Left ventricle myocardium inferior (tissue), 1 donor: ENCODE measurements at regions of chr22 and their contacts with region 1.

Region 1: DNA sequence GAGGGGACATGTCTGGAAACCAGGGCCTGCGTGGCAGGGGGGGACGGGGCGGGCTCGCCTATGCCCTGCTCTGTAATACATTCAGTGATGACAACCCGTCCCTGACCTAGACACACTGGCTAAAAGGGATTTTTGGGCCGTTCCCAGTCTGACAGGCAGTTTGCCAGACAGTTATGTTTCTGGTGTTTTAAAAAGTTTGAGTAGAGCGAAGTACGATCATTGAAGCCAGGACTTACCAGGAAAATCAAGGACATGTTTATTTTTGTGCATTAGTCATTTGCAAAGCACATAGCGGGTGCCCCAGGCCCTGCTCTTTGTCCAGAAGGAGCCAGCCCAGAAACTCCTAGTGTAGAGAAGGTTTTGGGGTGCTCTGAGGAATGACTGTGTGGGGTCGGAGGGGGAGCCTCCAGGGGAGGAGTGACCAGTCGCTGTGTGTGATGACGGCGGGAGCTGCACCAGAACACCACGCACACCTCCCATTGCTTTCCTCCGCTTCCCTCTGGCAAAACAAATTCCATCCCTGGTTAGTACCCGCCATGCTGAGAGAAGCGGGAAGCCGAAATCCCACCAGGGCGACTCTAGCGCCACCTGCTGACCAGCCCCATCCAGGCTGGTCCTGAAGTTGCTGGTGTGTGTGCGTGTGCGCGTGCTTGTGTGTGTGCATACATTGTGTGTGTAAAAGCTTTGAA is 50.8 kb downstream of the FBLN1 start:
- DNase-seq: peak; percentile 77
- H3K4me3 ChIP-seq: no peak overlapping the region
- H3K27ac ChIP-seq: peak overlapping the region; percentile 81
- H3K4me1 ChIP-seq: peaks cover 45% of the 10 kb centered on the region
- H3K27me3 ChIP-seq: peaks cover 21% of the 10 kb centered on the region
- CTCF ChIP-seq: peak; percentile 92

Region 2: DNA sequence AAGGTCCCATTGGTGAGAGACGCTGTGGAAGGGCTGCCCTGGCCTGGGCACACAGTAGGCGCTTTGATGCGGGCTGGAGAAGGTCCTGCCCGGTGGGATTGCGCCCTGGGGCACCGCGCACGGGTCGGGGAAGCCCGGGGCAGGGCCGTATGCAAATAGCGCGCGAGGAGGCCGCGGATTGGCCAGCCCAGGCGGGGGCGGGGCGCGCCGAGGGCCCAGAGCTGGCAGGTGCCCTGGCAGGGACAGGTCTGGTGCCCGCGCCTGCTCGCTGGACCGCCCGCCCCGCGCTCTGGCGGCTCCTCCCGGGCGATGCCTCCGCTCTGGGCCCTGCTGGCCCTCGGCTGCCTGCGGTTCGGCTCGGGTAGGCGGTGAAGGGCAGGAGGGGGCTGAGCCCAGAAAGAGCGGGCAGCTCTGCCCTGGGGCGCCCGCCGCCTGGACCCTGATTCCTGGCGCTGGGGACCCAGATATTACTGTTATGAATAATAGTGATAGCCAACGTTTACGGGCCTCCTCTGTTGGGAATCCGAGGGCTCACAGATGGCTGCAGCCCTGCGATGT is 268.7 kb before region 1 on chr22 and contains the start of gene UPK3A:
- intact Hi-C with region 1: loop called (anchors 10 kb)
- DNase-seq: peak; percentile 80
- H3K4me3 ChIP-seq: peak within 1 kb of the TSS; percentile 61
- H3K27ac ChIP-seq: peak within 1 kb of the TSS; percentile 46
- H3K4me1 ChIP-seq: peaks cover 21% of the 10 kb centered on the region
- H3K27me3 ChIP-seq: peaks cover 20% of the 10 kb centered on the region
- CTCF ChIP-seq: no peak
- total RNA-seq, gene UPK3A: not detected

Region 3: DNA sequence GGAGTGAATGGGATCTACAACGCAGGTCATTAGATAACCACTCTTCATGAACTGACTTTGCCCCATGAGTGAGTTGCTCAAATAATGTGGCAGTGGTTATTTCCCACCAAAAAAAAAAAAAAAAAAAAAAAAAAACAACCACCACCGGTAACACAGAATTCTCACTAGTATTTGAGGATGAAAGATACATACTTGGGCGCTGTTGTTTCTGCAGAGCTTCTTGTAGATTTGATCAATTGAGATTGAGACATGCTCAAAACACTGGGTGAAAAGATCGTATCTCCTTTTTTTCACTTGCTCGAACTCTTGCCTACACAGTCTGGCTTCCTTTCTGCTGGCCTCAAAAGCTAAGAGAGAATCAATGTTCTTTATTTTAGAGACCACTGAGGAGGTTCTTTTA is 199.7 kb before region 1 on chr22:
- intact Hi-C with region 1: no loop called
- DNase-seq: no peak
- H3K4me3 ChIP-seq: no peak overlapping the region
- H3K27ac ChIP-seq: no peak overlapping the region
- H3K4me1 ChIP-seq: no peaks in the 10 kb centered on the region
- H3K27me3 ChIP-seq: no peaks in the 10 kb centered on the region
- CTCF ChIP-seq: no peak

Region 4: GRCh38 chr22:45584121-45584570 is 30.7 kb after region 1 on chr22:
- intact Hi-C with region 1: no loop called
- DNase-seq: no peak
- H3K4me3 ChIP-seq: no peak overlapping the region
- H3K27ac ChIP-seq: no peak overlapping the region
- H3K4me1 ChIP-seq: peaks cover 4% of the 10 kb centered on the region
- H3K27me3 ChIP-seq: peaks cover 47% of the 10 kb centered on the region
- CTCF ChIP-seq: no peak

Region 5: GRCh38 chr22:46366801-46367706 is 813.6 kb after region 1 on chr22:
- intact Hi-C with region 1: no loop called
- DNase-seq: no peak
- H3K4me3 ChIP-seq: no peak overlapping the region
- H3K27ac ChIP-seq: no peak overlapping the region
- H3K4me1 ChIP-seq: no peaks in the 10 kb centered on the region
- H3K27me3 ChIP-seq: peaks cover 30% of the 10 kb centered on the region
- CTCF ChIP-seq: no peak